ENCODE measurements at regions of chr2 and their contacts with region 1.

Region 1: GRCh38 chr2:135004005-135004746 is 43.1 kb downstream of the MAP3K19 start:
- DNase-seq: peak; percentile 80
- H3K4me3 ChIP-seq: no peak overlapping the region; a peak in 1 of 4 replicates
- H3K27ac ChIP-seq: no peak overlapping the region
- H3K4me1 ChIP-seq: peaks cover 0 to 3% of the 10 kb centered on the region in 2 experiments; a peak in 1 of 4 replicates
- H3K27me3 ChIP-seq: no peaks in the 10 kb centered on the region
- CTCF ChIP-seq: peak; percentile 97
- EP300 ChIP-seq: no peak
- RAD21 ChIP-seq: peak; percentile 99

Region 2: DNA sequence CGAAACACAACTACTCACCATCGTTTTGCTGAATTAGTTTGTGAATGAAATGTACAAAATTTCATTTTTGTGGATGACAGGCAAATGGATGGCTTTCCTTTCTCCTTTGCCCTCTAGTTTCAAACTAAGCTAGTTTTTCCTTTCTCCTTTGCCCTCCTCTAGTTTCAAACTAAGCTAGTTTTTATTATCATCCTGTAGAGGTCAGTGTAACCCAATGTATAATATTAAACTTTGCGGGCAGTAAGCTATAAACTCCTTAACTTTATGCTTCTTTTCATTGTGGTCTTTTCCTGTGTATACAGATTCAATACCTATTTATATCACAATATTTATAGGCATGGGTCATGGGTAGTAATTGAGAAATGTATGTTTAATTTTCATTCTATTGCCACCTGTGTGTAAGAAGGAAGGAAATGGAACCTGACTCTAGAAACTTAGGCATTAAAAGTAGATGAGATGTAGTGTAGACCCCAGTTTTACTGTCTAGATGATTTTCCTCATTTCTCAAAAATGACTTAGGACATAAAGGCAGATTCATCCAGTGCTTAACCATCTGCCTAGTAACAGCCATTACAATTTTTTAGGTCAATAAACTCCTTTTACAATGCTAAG is 15.1 kb before region 1 on chr2:
- CTCF ChIA-PET with region 1: interaction called, 44 read pairs
- POLR2A ChIA-PET with region 1: no interaction called
- DNase-seq: peak; percentile 42
- H3K4me3 ChIP-seq: no peak overlapping the region
- H3K27ac ChIP-seq: no peak overlapping the region
- H3K4me1 ChIP-seq: no peaks in the 10 kb centered on the region
- H3K27me3 ChIP-seq: no peaks in the 10 kb centered on the region
- CTCF ChIP-seq: peak; percentile 66
- EP300 ChIP-seq: no peak
- RAD21 ChIP-seq: peak; percentile 72

Region 3: GRCh38 chr2:135023886-135024485 is 19.8 kb after region 1 on chr2:
- CTCF ChIA-PET with region 1: interaction called, 34 read pairs
- POLR2A ChIA-PET with region 1: no interaction called
- DNase-seq: no peak
- H3K4me3 ChIP-seq: no peak overlapping the region
- H3K27ac ChIP-seq: no peak overlapping the region
- H3K4me1 ChIP-seq: no peaks in the 10 kb centered on the region
- H3K27me3 ChIP-seq: no peaks in the 10 kb centered on the region
- CTCF ChIP-seq: no peak
- EP300 ChIP-seq: no peak
- RAD21 ChIP-seq: no peak

Region 4: GRCh38 chr2:135030826-135031225 is 26.6 kb after region 1 on chr2:
- CTCF ChIA-PET with region 1: interaction called, 14 read pairs
- POLR2A ChIA-PET with region 1: no interaction called
- DNase-seq: no peak
- H3K4me3 ChIP-seq: no peak overlapping the region
- H3K27ac ChIP-seq: no peak overlapping the region
- H3K4me1 ChIP-seq: no peaks in the 10 kb centered on the region
- H3K27me3 ChIP-seq: no peaks in the 10 kb centered on the region
- CTCF ChIP-seq: no peak
- EP300 ChIP-seq: no peak
- RAD21 ChIP-seq: no peak

Region 5: DNA sequence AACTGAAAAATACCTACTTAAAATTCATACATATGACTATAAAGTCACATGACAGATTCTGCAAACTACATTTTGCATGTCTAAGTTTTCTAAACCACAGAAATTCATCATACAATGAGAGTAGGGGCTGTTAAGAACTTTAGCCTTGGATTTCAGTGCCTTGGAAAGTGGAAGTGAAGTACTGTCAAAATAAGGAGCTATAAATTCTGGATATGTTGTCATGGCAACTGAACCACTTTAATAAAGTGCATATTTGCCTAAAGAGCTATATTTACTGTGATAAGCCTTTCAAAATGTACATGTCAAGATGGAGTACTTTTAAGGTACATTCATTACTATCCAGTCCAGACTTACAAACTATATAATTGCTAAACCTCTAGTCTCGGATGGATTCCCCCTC is 275.1 kb after region 1 on chr2:
- CTCF ChIA-PET with region 1: no interaction called
- POLR2A ChIA-PET with region 1: no interaction called
- DNase-seq: no peak
- H3K4me3 ChIP-seq: no peak overlapping the region
- H3K27ac ChIP-seq: no peak overlapping the region
- H3K4me1 ChIP-seq: no peaks in the 10 kb centered on the region
- H3K27me3 ChIP-seq: no peaks in the 10 kb centered on the region
- CTCF ChIP-seq: no peak
- EP300 ChIP-seq: no peak
- RAD21 ChIP-seq: no peak

Region 6: GRCh38 chr2:135600915-135601314 is 596.7 kb after region 1 on chr2:
- CTCF ChIA-PET with region 1: interaction called, 10 read pairs
- POLR2A ChIA-PET with region 1: no interaction called
- DNase-seq: no peak
- H3K4me3 ChIP-seq: no peak overlapping the region
- H3K27ac ChIP-seq: no peak overlapping the region
- H3K4me1 ChIP-seq: no peaks in the 10 kb centered on the region; a peak in 1 of 4 replicates
- H3K27me3 ChIP-seq: no peaks in the 10 kb centered on the region
- CTCF ChIP-seq: peak; percentile 45
- EP300 ChIP-seq: no peak
- RAD21 ChIP-seq: peak; percentile 56; the same call in 1 of the 2 replicates

Region 7: GRCh38 chr2:135792401-135793150 is 788.4 kb after region 1 on chr2:
- CTCF ChIA-PET with region 1: interaction called, 75 read pairs
- POLR2A ChIA-PET with region 1: no interaction called
- DNase-seq: no peak
- H3K4me3 ChIP-seq: no peak overlapping the region
- H3K27ac ChIP-seq: no peak overlapping the region
- H3K4me1 ChIP-seq: no peaks in the 10 kb centered on the region; a peak in 1 of 4 replicates
- H3K27me3 ChIP-seq: no peaks in the 10 kb centered on the region
- CTCF ChIP-seq: no peak
- EP300 ChIP-seq: no peak
- RAD21 ChIP-seq: no peak

Measured in SK-N-SH (cell line).